Activated B cell treated with CpG ODN at 0.5 μM for 24 hours (primary cell): ENCODE measurements at regions of chr11 and their contacts with region 1.

Region 1: DNA sequence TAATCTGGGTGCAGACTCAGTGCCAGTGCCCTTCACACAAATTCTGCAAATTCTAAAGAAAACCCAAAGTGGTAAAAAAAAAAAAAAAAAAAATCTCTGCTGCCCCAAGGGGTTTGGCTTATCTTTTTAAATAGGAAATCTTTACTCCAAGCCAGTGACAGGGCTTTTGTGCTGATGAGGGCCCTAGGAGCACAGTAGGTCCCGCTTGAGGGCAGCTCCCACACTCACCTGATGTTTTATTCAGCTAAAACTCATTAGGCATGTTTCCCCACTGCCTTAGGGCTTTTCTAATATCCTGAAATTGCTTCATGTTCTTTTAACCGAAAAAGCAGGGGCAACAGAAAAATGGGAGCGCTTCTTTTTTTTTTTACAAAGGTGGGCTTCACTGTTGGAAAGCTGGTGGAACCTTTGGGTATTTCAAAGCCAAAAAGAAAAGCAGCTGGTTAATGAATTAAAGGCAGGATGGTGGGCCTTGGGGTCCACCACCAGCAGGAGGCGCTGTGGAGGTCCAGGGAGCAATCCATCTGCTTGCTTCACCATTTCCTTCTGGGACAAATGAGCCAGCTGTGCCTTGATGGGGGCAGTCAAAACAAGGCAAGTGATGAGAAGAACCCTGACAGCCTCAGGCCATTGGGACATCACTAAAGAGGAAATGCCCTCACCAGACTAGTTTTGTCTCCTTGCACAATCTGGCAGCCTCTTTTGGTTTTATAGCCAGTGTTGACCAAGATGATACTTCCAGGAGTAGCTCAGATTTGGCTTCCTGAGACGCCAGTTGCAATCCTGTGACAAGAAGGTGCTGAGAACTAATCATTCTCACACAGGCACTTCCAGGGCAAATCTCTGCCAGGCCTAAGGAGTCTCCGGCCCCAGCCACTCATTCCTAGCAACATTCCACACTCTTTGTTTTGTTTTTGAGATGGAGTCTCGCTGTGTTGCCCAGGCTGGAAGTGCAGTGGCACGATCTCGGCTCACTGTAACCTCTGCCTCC is 38.4 kb upstream of the WEE1 start:
- DNase-seq: peak; percentile 71
- ATAC-seq: peak; percentile 71
- H3K4me3 Mint-ChIP-seq: no peak overlapping the region
- H3K27ac Mint-ChIP-seq: no peak overlapping the region
- H3K4me1 Mint-ChIP-seq: peaks cover 5% of the 10 kb centered on the region
- H3K27me3 Mint-ChIP-seq: no peaks in the 10 kb centered on the region
- CTCF ChIP-seq: no peak

Region 2: DNA sequence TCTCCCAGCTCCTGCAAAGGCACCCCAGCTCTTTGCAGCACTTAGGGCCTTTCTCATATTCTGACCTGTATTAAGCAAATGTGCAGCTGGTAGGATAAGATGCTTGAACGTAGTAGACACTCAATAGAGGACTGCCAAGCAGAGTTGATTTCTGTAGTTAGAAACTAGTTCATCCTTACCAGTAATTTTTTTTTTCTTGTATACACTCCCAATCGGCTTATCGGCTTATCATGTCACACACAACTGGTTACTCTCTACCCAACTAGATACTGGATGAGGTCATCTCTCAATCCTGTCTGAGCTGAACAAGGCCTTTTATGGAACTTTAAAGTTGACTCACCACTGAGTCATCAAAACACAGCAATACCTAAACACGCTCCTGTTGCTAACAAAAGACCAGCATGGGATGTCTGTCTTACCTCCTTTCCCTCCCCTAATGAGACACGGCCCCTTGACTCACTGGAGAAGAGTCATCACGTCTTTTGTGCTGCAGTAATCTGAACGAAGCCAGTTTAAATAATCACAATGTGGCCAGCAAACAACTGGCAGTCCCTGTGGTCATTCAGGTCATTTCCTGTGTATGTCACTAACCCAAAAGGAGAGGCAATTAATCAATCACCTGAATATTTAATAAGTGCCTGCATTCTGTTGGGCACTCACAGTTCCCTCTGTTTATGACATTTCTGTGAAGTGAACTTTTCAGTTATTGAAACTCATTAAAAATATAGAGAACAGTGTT is 30.9 kb after region 1 on chr11:
- CTCF ChIA-PET with region 1: interaction called, 11 read pairs
- POLR2A ChIA-PET with region 1: interaction called, 3 read pairs
- intact Hi-C with region 1: no loop called
- DNase-seq: no peak
- ATAC-seq: peak; percentile 81
- H3K4me3 Mint-ChIP-seq: peak overlapping the region; percentile 12
- H3K27ac Mint-ChIP-seq: peak overlapping the region; percentile 80
- H3K4me1 Mint-ChIP-seq: peaks cover 40% of the 10 kb centered on the region
- H3K27me3 Mint-ChIP-seq: no peaks in the 10 kb centered on the region
- CTCF ChIP-seq: no peak